ENCODE measurements at regions of chr9 and their contacts with region 1.

Region 1: DNA sequence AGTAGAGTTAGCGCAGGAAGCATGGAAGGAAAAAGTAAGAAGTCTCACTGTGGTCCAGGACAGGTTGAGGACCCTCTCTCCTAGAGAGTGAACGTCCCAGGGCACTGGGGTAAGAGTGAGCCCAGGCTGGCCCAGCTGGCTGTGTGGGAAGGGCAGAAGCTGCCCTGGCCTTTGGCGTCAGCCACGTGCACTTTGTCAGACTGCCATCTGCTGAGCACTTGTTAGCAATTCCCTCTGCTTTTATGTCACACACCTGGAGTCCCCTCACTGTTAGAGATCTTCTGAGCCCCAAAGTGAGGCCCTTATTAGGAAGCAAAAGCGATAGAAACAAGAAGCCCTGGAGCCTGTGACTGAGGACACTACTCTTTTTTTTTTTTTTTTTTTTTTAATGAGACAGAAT is 79.1 kb downstream of the UGCG start:
- DNase-seq: no peak
- ATAC-seq: no peak
- H3K4me3 ChIP-seq: no peak overlapping the region
- H3K27ac ChIP-seq: no peak overlapping the region
- H3K4me1 ChIP-seq: peaks cover 3% of the 10 kb centered on the region
- H3K27me3 ChIP-seq: no peaks in the 10 kb centered on the region
- CTCF ChIP-seq: no peak
- POLR2A ChIP-seq: no peak
- RAD21 ChIP-seq: no peak

Region 2: DNA sequence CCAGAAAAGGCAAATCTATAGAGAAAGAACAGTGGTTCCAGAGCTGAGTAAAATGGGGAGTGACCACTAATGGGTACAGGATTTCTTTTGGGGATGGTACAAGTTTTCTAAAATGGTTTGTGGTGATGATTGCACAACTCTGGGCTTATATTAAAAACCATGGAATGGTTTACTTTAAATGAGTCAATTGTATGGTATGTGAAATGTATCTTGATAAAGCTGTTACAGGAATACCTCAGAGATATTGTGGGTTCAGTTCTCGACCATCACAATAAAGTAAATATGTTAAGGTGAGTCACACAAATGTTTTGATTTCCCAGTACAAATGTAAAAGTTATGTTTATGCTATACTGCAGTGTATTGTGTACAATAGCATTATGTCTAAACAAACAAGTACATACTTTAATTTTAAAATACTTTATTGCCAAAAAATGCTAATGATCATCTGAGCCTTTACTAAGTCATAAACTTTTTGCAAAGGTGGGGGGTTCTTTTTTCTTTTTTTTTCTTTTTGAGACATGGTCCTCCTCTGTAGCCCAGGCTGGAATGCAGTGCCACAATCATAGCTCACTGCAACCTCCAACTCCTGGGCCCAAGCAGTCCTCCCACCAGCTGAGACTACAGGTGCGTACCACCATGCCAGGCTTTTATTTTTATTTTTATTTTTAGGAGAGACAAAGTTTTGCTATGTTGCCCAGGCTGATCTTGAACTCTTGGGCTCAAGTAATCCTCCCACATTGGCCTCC is 246.9 kb before region 1 on chr9:
- CTCF ChIA-PET with region 1: no interaction called
- POLR2A ChIA-PET with region 1: no interaction called
- dilution Hi-C with region 1: no loop called
- in situ Hi-C with region 1: no loop called
- intact Hi-C with region 1: loop called (anchors 1 kb)
- DNase-seq: peak; percentile 97
- ATAC-seq: peak; percentile 86
- H3K4me3 ChIP-seq: no peak overlapping the region
- H3K27ac ChIP-seq: peak overlapping the region; percentile 88
- H3K4me1 ChIP-seq: peaks cover 8% of the 10 kb centered on the region
- H3K27me3 ChIP-seq: no peaks in the 10 kb centered on the region
- CTCF ChIP-seq: no peak
- POLR2A ChIP-seq: no peak
- RAD21 ChIP-seq: no peak

Region 3: GRCh38 chr9:111952559-111952958 is 23.1 kb before region 1 on chr9:
- CTCF ChIA-PET with region 1: no interaction called
- POLR2A ChIA-PET with region 1: no interaction called
- dilution Hi-C with region 1: no loop called
- in situ Hi-C with region 1: no loop called
- intact Hi-C with region 1: no loop called
- DNase-seq: peak; percentile 96
- ATAC-seq: peak; percentile 48
- H3K4me3 ChIP-seq: no peak overlapping the region
- H3K27ac ChIP-seq: no peak overlapping the region
- H3K4me1 ChIP-seq: peaks cover 5% of the 10 kb centered on the region
- H3K27me3 ChIP-seq: no peaks in the 10 kb centered on the region
- CTCF ChIP-seq: no peak
- POLR2A ChIP-seq: no peak
- RAD21 ChIP-seq: no peak

Region 4: DNA sequence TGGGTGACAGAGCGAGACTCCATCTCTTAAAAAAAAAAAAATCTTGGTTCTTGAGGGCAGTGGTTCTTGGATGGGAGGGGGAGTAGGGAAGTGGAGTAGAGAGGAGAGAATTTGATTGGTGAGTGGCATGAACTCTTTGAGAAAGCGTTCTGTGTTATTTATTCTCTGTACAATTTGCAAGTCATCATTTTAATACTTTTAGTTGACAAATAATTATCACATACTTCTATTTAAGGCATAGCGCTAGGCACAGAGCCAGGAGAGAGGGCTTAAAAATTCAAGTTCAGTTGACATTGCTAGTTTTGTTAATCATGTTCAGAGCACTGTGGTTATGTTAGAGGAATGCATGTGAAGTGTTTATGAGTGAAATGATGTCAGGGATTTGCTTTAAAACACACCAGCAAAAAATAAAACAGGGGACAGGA is 428.8 kb after region 1 on chr9:
- CTCF ChIA-PET with region 1: no interaction called
- POLR2A ChIA-PET with region 1: no interaction called
- dilution Hi-C with region 1: no loop called
- in situ Hi-C with region 1: no loop called
- intact Hi-C with region 1: no loop called
- DNase-seq: peak; percentile 16
- ATAC-seq: peak; percentile 56
- H3K4me3 ChIP-seq: no peak overlapping the region
- H3K27ac ChIP-seq: peak overlapping the region; percentile 42; the same call in 1 of the 2 replicates
- H3K4me1 ChIP-seq: peaks cover 6% of the 10 kb centered on the region
- H3K27me3 ChIP-seq: no peaks in the 10 kb centered on the region
- CTCF ChIP-seq: no peak
- POLR2A ChIP-seq: no peak
- RAD21 ChIP-seq: no peak